HCT116 (cell line): ENCODE measurements at regions of chr7 and their contacts with region 1.

Region 1: GRCh38 chr7:20330240-20330927 is at the start of gene ITGB8:
- DNase-seq: no peak
- ATAC-seq: peak; percentile 73
- H3K4me3 ChIP-seq: peak within 1 kb of the TSS; percentile 66 to 81
- H3K27ac ChIP-seq: peak within 1 kb of the TSS; percentile 86
- H3K4me1 ChIP-seq: peaks cover 3 to 18% of the 10 kb centered on the region in 2 experiments; a peak in 3 of 4 replicates
- H3K27me3 ChIP-seq: no peaks in the 10 kb centered on the region
- CTCF ChIP-seq: peak in 1 of 3 experiments; percentile 11; a peak in 1 of 6 replicates
- POLR2A ChIP-seq: peak; percentile 18
- RAD21 ChIP-seq: no peak
- total RNA-seq, gene ITGB8: 2.4 TPM

Region 2: GRCh38 chr7:20199015-20199737 is 131.2 kb before region 1 on chr7:
- CTCF ChIA-PET with region 1: no interaction called
- POLR2A ChIA-PET with region 1: no interaction called
- RAD21 ChIA-PET with region 1: no interaction called
- intact Hi-C with region 1: loop called (anchors 5 kb)
- DNase-seq: peak; percentile 94
- ATAC-seq: peak; percentile 95
- H3K4me3 ChIP-seq: peak overlapping the region in 1 of 2 experiments; percentile 27; a peak in 2 of 4 replicates
- H3K27ac ChIP-seq: peak overlapping the region; percentile 47; the same call in 1 of the 2 replicates
- H3K4me1 ChIP-seq: peaks cover 20 to 39% of the 10 kb centered on the region in 2 experiments
- H3K27me3 ChIP-seq: no peaks in the 10 kb centered on the region
- CTCF ChIP-seq: no peak
- POLR2A ChIP-seq: no peak
- RAD21 ChIP-seq: no peak